Activated naive CD4-positive, alpha-beta T cell treated with anti-CD3 and anti-CD28 coated beads for 36 hours (primary cell): ENCODE measurements at regions of chr15 and their contacts with region 1.

Region 1: DNA sequence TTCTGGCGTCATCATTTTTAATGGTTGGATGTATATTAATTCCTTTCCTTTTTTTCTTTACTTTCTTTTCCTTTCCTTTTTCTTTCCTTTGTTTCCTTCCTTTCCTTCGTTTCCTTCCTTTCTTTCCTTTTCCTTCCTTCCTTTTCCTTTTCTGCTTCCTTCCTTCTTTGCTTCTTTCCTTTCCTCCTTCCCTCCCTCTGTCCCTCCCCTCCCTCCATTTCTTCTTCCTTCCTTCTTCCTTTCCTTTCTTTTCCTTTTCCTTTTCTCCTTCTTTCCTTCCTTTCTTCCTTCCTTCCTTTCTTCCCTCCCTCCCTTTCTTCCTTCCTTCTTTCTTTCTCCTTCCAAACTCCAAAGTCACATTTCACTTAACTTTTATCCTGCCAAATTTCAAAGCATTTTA is 54.9 kb upstream of the LYSMD4 start:
- DNase-seq: no peak
- H3K4me3 Mint-ChIP-seq: no peak overlapping the region
- H3K27ac Mint-ChIP-seq: no peak overlapping the region
- H3K4me1 Mint-ChIP-seq: no peaks in the 10 kb centered on the region
- H3K27me3 Mint-ChIP-seq: peaks cover 8% of the 10 kb centered on the region

Region 2: GRCh38 chr15:99909592-99910295 is 121.6 kb after region 1 on chr15:
- CTCF ChIA-PET with region 1: no interaction called
- intact Hi-C with region 1: loop called (anchors 5 kb)
- DNase-seq: peak; percentile 38
- H3K4me3 Mint-ChIP-seq: no peak overlapping the region
- H3K27ac Mint-ChIP-seq: no peak overlapping the region
- H3K4me1 Mint-ChIP-seq: peaks cover 6% of the 10 kb centered on the region
- H3K27me3 Mint-ChIP-seq: no peaks in the 10 kb centered on the region